ENCODE measurements at regions of chr3 and their contacts with region 1.

Region 1: DNA sequence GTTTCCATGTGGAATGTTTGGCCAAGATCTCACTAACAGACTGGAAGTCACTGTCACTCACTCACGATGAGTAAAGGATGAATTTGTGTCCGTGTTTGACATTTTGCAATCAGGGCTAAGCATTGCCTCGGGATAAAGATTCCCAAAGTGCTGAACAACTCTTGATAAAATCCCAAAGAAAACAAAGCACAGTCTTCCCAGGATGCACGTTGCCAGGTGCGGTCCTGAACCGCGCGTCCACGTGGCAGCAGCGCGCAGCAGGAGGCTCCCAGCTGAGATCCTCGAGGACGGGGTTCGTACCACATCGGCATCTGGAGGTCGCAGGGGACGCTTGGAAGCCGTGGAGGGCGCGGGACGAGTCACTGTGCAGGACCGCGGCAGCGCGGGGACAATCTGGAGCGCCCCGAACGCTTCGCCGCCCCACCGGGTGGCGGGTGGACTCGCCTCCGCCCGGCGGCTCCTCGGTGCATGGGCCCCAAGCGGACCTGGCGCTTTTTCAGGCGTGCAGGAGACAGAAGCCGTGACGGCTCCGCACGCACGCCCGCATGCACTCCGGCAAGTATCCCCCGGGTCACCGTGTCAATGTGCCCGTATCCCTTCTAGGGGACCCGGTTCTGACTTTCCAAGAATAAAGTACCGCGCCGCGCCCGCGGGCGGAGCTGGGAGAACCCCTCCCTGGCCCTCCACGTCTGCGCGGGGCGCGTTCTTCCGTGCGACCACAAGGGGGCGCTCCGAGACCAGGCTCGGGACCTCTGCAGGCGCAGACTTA is 17.7 kb downstream of the CPN2 start:
- DNase-seq: peak; percentile 88
- H3K4me3 Mint-ChIP-seq: peak overlapping the region; percentile 65
- H3K27ac Mint-ChIP-seq: no peak overlapping the region
- H3K4me1 Mint-ChIP-seq: peaks cover 12% of the 10 kb centered on the region
- H3K27me3 Mint-ChIP-seq: peaks cover 36% of the 10 kb centered on the region

Region 2: DNA sequence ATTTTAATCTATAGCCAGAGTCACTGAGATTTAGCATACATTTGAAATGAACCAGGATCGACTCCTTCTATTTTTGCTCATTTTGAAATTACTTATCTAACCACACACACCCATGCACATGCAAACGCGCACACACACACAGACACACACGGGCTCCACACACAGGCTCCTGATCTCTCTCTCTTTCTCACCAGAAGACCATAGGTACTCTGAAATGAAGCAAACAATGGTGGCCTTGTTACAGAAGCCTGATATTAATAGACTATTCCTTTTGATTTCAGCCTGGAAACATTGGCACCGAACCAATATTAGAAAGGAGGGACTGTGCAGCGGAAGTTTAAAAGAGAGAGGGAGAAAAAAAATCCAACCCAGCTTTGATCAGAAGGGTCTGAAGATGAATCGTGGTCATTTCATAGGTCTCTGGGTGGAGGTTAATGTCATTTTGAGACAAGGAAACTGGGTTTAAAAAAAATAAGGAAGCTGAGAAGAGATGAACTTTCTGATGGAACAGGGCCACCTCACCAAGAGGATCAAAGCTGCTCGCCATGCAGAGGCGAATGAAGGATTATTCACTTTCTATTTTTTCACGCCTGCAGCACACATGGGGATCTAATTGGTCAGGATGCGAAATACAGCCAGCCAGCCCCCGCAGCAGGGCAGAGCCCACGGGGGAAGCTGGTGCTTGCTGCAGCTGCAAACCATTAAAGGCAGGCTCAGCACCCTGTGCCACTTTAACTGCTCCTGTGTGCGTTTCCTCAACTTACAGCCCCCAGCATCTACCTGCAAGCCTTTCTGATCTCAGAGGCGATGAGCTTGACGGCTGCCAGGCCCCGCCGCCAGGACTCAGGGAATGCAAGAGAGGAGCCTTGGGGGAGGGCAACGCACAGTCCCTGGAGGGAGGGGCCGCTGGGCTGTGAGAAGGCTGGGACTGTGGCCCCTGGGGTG is 108.7 kb before region 1 on chr3:
- CTCF ChIA-PET with region 1: no interaction called
- POLR2A ChIA-PET with region 1: no interaction called
- DNase-seq: no peak
- H3K4me3 Mint-ChIP-seq: no peak overlapping the region
- H3K27ac Mint-ChIP-seq: no peak overlapping the region
- H3K4me1 Mint-ChIP-seq: peaks cover 22% of the 10 kb centered on the region
- H3K27me3 Mint-ChIP-seq: peaks cover 77% of the 10 kb centered on the region

Region 3: DNA sequence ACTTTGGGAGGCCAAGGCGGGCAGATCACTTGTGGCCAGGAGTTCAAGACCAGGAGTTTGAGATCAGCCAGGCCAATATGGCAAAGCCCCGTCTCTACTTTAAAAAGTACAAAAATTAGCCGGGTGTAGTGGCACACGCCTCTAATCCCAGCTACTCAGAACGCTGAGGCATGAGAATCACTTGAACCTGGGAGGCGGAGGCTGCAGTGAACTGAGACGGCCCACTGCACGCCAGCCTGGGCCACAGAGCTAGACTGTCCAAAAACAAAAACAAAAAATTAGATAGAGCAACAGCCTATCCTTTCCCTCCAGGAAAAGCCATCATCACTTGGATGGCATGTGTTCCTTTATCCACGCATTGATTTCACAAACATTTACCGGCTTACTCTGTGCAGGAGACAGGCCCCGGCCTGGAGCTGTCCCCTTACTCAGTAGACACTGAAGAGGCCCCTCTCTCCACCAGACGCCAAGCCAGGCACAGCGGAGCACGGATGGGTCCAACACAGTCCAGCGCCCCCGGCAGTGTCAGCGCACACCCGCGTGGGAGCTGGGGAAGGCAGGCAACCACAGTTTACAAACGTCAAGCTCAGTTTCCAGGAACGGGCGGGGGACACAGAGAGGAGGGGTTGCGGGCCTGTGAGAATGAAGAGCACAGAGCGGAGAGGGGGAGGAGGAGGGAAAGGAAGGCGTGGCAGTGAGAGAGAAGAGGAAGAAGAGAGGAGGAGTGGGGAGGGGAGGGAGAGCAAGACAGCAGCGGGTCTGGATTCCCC is 62.6 kb after region 1 on chr3:
- CTCF ChIA-PET with region 1: interaction called, 38 read pairs
- POLR2A ChIA-PET with region 1: interaction called, 5 read pairs
- DNase-seq: peak; percentile 64
- H3K4me3 Mint-ChIP-seq: peak overlapping the region; percentile 55
- H3K27ac Mint-ChIP-seq: peak overlapping the region; percentile 47
- H3K4me1 Mint-ChIP-seq: peaks cover 55% of the 10 kb centered on the region
- H3K27me3 Mint-ChIP-seq: peaks cover 46% of the 10 kb centered on the region

Region 4: DNA sequence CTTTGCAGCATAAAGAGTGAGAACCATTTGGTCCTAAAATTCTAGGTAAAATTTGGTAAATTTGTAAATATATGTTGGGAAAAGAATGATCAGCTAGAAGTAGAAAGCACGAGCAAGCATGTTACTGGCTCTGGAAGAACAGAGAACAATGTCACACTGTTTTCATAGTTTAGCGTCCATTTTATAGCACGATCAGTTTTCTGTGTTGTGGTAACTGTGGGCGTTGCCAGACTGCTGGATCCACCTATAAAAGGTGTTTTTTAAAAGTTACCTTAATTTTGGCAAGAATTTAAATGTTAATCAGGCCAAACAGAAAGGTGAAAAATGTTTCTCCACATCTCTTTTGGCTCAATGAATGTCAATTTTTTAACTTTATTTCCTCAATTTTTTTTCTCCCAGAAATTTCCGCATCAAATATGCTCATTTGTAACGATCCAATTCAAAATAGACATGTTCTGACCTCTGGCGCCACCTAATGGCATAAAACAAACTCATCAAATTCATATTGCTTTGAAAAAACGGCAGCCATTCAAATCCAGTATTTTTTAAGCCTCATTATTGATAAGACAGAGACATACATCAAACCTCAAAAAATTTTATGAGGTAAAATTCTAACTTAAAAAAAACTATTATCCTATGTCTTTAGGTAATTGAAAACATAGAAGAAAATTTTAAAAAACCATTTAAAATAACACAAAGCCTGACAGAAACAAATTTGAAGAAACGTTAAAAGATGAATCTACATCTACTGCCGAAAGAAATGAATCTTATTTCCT is 71.2 kb after region 1 on chr3:
- CTCF ChIA-PET with region 1: interaction called, 35 read pairs
- POLR2A ChIA-PET with region 1: interaction called, 3 read pairs
- DNase-seq: no peak
- H3K4me3 Mint-ChIP-seq: no peak overlapping the region
- H3K27ac Mint-ChIP-seq: no peak overlapping the region
- H3K4me1 Mint-ChIP-seq: peaks cover 8% of the 10 kb centered on the region
- H3K27me3 Mint-ChIP-seq: peaks cover 4% of the 10 kb centered on the region

Measured in activated CD4-positive, alpha-beta memory T cell treated with anti-CD3 and anti-CD28 coated beads, Interleukin-2, amount 10 ng/mL, durations not matched to agents 7 days and 5 days (primary cell).